ENCODE measurements at regions of chr10 and their contacts with region 1.

Region 1: DNA sequence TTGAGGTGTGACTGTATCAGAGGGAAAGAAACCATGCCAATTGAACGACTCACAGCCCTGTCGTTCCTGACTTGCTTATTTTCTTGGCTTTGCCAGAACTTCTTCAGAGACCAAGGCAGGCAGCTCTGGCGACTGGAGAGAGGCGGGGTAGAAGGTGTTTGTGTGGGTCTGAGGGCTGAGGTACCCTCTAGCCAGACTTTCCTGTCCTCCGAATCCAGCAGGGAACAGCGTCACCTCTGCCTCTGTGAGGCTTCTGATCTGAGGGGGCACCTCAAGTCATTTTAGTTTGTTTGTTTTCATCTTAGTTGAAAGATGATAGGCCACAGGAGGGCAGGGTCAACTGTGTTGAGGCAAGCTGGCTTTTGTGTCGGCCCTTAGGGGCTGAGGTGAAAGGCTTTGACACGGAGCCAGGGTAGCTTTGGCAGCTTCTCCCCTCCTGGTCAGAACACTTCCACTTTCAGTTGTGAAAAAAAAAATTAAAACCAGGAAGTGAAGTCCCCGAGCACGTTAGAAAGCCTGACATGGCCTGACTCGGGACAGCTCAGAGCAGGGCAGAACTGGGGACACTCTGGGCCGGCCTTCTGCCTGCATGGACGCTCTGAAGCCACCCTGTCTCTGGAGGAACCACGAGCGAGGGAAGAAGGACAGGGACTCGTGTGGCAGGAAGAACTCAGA is 1.9 kb downstream of the ACSL5 start:
- DNase-seq: no peak
- ATAC-seq: peak; percentile 1
- H3K4me3 ChIP-seq: peak overlapping the region; percentile 34 to 38
- H3K27ac ChIP-seq: peak overlapping the region; percentile 77
- H3K4me1 ChIP-seq: peaks cover 75 to 87% of the 10 kb centered on the region in 2 experiments
- H3K27me3 ChIP-seq: no peaks in the 10 kb centered on the region
- CTCF ChIP-seq: no peak
- POLR2A ChIP-seq: no peak
- RAD21 ChIP-seq: no peak

Region 2: GRCh38 chr10:112332509-112333228 is 43.2 kb before region 1 on chr10:
- CTCF ChIA-PET with region 1: no interaction called
- POLR2A ChIA-PET with region 1: interaction called, 16 read pairs
- RAD21 ChIA-PET with region 1: interaction called, 3 read pairs
- intact Hi-C with region 1: no loop called
- DNase-seq: peak; percentile 94
- ATAC-seq: peak; percentile 75
- H3K4me3 ChIP-seq: peak overlapping the region in 1 of 2 experiments; percentile 29; a peak in 2 of 4 replicates
- H3K27ac ChIP-seq: peak overlapping the region; percentile 60
- H3K4me1 ChIP-seq: peaks cover 77 to 100% of the 10 kb centered on the region in 2 experiments
- H3K27me3 ChIP-seq: no peaks in the 10 kb centered on the region
- CTCF ChIP-seq: no peak
- POLR2A ChIP-seq: no peak
- RAD21 ChIP-seq: no peak

Region 3: GRCh38 chr10:112361951-112362751 is 13.7 kb before region 1 on chr10:
- CTCF ChIA-PET with region 1: interaction called, 7 read pairs
- POLR2A ChIA-PET with region 1: interaction called, 47 read pairs
- RAD21 ChIA-PET with region 1: interaction called in 1 of 2 experiments, 3 read pairs
- intact Hi-C with region 1: no loop called
- DNase-seq: no peak
- ATAC-seq: peak; percentile 60
- H3K4me3 ChIP-seq: no peak overlapping the region
- H3K27ac ChIP-seq: peak overlapping the region; percentile 83
- H3K4me1 ChIP-seq: peaks cover 41 to 73% of the 10 kb centered on the region in 2 experiments
- H3K27me3 ChIP-seq: no peaks in the 10 kb centered on the region
- CTCF ChIP-seq: peak in 2 of 3 experiments; percentile 55 to 61; a peak in 4 of 6 replicates
- POLR2A ChIP-seq: no peak
- RAD21 ChIP-seq: no peak

Region 4: GRCh38 chr10:112389147-112389822 is 13.4 kb after region 1 on chr10:
- CTCF ChIA-PET with region 1: interaction called, 15 read pairs
- POLR2A ChIA-PET with region 1: interaction called, 134 read pairs
- RAD21 ChIA-PET with region 1: interaction called, 3 to 6 read pairs
- intact Hi-C with region 1: no loop called
- DNase-seq: peak; percentile 99
- ATAC-seq: peak; percentile 83
- H3K4me3 ChIP-seq: 0 out of 4 replicates have a peak overlapping the region, but pooled peaks of 1 of the 2 experiments have one; percentile 7
- H3K27ac ChIP-seq: peak overlapping the region; percentile 77
- H3K4me1 ChIP-seq: peaks cover 94 to 97% of the 10 kb centered on the region in 2 experiments
- H3K27me3 ChIP-seq: no peaks in the 10 kb centered on the region
- CTCF ChIP-seq: no peak
- POLR2A ChIP-seq: no peak
- RAD21 ChIP-seq: no peak

Region 5: DNA sequence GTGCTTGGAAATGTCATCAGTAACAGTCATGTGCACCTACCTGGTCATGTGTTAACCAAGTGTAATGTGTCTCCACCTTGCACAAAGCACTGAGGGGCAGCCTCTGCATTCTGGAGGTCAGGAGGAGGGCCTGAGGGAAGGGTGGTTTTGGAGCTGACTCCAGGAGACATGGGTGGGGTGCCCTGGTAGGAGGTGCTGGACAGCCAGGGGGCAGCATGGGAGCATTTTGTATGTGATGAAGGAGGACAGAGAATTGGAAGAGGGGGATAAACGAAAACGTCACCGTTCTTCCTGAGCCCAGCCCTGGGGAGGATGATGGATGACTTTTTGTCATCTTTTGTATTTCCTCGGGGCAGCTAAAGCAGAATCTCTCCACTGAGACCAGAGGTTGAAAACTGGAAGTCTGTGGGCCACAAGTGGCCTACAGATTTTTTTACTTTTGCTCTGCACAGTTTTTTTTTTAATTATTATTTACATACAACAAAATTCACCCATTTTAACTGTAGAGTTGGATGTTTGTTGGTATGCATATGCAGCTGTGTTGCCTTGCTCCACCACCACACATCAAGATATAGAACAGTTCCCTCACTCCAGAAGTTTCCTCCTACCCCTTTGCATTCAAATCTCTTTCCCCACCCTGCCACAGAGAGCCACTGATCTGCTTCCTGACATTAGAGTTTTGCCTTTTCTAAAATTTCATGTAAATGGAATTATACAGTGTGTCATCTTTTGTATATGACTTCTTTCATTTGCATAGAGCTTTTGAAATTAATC is 313.6 kb after region 1 on chr10:
- CTCF ChIA-PET with region 1: no interaction called
- POLR2A ChIA-PET with region 1: no interaction called
- RAD21 ChIA-PET with region 1: no interaction called
- intact Hi-C with region 1: no loop called
- DNase-seq: peak; percentile 10
- ATAC-seq: peak; percentile 87
- H3K4me3 ChIP-seq: no peak overlapping the region
- H3K27ac ChIP-seq: no peak overlapping the region
- H3K4me1 ChIP-seq: peaks cover 7 to 15% of the 10 kb centered on the region in 2 experiments; a peak in 3 of 4 replicates
- H3K27me3 ChIP-seq: no peaks in the 10 kb centered on the region
- CTCF ChIP-seq: peak; percentile 38 to 70 (median 61); a peak in 5 of 6 replicates
- POLR2A ChIP-seq: no peak
- RAD21 ChIP-seq: peak; percentile 79

Region 6: DNA sequence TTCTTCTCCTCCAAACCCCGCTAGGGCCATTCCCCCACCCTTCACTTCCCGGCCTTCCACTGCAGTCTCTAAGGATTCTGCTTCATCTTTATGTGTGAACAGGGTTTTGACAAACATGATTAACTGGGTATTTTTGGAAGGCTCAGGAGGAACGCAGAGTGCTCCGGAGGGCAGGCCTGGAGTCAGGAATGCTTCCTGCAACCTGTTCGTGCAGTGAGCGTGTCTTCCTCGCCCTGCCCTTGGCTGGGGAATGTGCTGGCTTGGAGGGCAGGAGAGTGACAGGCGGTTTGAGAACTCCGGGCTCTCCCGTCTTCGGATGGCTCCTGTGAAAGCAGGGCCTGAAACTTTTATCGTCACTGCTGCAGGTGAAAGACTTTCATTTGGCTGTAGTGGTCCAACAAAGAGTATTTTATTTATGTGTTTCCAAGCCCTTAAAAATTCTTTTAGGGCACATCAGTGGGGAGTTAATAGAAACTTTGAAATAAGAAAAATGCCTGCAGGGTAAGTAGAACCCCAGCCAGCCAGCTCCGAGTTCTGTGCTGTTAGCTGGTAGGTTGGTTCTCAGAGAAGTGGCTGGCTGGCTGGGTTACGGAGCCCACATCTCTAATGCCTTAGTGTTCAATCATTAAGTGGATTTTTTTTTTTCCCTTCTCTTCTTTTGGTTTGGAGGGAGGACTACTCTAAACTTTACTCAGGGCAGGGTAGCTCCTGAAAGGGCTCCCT is 625.2 kb after region 1 on chr10:
- CTCF ChIA-PET with region 1: no interaction called
- POLR2A ChIA-PET with region 1: no interaction called
- RAD21 ChIA-PET with region 1: no interaction called
- intact Hi-C with region 1: no loop called
- DNase-seq: no peak
- ATAC-seq: no peak
- H3K4me3 ChIP-seq: no peak overlapping the region
- H3K27ac ChIP-seq: no peak overlapping the region
- H3K4me1 ChIP-seq: peaks cover 0 to 19% of the 10 kb centered on the region in 2 experiments; a peak in 2 of 4 replicates
- H3K27me3 ChIP-seq: no peaks in the 10 kb centered on the region
- CTCF ChIP-seq: no peak
- POLR2A ChIP-seq: no peak
- RAD21 ChIP-seq: no peak

Measured in HCT116 (cell line).